Dorsolateral prefrontal cortex (tissue), 120 donors: ENCODE measurements at regions of chr5 and their contacts with region 1.

Region 1: DNA sequence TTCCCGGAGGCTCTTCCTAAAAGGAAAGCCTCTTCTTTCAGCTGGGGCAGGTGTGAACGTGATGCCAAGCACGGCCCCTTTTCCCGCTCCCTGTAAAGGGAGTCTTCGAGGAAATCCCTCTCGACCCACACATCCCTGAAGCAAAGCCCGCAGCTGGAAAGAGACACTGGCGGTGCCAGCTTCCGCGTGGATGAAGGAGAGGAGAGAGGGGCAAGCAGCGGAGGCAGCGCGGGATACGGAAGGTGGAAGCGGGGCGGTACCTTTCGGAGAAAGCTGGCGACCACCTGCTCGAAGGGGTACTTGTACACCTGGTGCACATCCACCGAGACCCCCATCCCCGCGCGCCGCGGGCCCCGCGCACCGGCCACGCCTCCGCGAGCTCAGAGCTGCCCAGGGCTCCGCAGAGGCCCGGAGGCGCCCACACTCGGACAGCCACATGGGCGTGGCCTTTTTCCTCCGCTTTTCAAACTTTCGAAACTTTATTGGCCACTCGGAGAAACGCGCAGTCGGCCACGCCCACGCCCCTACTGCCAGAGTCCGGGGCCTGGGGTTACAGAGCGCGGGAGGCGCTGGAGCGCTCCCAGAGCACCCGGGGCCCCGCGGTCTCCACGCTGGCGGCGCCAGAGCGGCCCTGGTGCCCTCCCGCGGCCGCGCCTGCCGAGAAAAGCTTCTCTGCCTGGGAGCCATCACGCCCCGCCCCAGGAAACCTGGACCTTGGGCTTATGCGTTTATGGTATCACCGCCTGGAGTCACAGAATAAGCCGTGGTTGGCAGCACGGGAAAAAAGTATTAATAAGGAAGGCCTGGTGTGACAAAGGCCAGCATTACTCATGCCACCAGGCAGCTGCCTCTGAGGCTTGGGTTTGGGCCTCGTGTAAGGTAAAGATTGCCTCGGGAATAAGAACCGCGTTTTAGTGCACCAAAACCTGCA is at the start of gene PRELID2:
- DNase-seq: peak; percentile 13 to 85 (median 68)
- H3K4me3 ChIP-seq: peak within 1 kb of the TSS; percentile 44 to 94 (median 78)
- H3K27ac ChIP-seq: peak within 1 kb of the TSS in 43 of 59 donors; percentile 5 to 85 (median 49)
- H3K27me3 ChIP-seq: no peaks in the 10 kb centered on the region
- CTCF ChIP-seq: peak in 36 of 56 donors; percentile 18 to 65 (median 32)
- total RNA-seq, gene PRELID2: 9.0 to 43.7 (median 22.9) TPM

Region 2: GRCh38 chr5:145889578-145889977 is 54.4 kb after region 1 on chr5:
- intact Hi-C with region 1: no loop called
- DNase-seq: no peak
- H3K4me3 ChIP-seq: no peak overlapping the region
- H3K27ac ChIP-seq: no peak overlapping the region
- H3K27me3 ChIP-seq: peaks cover 0 to 4% (median 0%) of the 10 kb centered on the region in 45 donors
- CTCF ChIP-seq: no peak

Region 3: GRCh38 chr5:145906401-145906800 is 71.2 kb after region 1 on chr5:
- intact Hi-C with region 1: loop called in 1 of 2 experiments (anchors 2 kb)
- DNase-seq: no peak
- H3K4me3 ChIP-seq: no peak overlapping the region
- H3K27ac ChIP-seq: no peak overlapping the region
- H3K27me3 ChIP-seq: no peaks in the 10 kb centered on the region
- CTCF ChIP-seq: no peak

Region 4: GRCh38 chr5:146049014-146049703 is 214.0 kb after region 1 on chr5:
- intact Hi-C with region 1: loop called (anchors 5 to 10 kb)
- DNase-seq: peak in 6 of 10 donors; percentile 8 to 50 (median 48)
- H3K4me3 ChIP-seq: no peak overlapping the region
- H3K27ac ChIP-seq: no peak overlapping the region
- H3K27me3 ChIP-seq: no peaks in the 10 kb centered on the region
- CTCF ChIP-seq: peak; percentile 49 to 83 (median 71)